ENCODE measurements at regions of chr19 and their contacts with region 1.

Region 1: DNA sequence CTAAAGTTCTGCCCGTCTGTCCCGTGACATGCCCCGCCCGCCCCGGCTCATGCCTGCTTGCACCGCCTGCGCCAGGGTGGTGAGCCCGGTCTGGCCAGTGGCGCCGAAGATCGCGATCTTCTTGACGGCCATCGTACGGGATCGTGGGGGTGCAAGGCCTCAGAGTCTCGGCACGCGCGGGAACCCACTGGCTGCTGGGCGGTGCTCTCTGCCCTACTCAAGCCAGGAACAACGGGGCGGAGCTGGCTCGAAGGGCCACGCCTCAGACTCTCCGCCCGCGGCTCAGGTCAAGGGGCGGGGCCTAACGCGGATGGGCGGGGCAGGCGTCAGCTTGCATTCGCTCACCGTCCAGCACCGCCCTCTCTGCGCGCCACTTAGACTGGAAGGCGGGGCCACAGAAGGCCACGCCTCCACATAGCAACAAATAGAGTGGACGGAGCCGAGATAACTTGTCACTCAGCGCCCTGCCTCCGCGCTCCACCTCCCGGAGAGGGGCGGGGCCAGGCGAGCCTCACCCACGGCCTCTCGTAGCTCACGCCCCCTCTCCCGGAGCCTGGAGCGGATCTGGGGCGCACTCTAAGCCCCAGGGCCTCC is at the start of gene BLVRB:
- DNase-seq: peak; percentile 100
- H3K4me3 ChIP-seq: peak within 1 kb of the TSS; percentile 43
- CTCF ChIP-seq: no peak
- POLR2A ChIP-seq: peak in 1 of 2 donors; percentile 65
- total RNA-seq, gene BLVRB: 139 to 161 (median 154) TPM

Region 2: DNA sequence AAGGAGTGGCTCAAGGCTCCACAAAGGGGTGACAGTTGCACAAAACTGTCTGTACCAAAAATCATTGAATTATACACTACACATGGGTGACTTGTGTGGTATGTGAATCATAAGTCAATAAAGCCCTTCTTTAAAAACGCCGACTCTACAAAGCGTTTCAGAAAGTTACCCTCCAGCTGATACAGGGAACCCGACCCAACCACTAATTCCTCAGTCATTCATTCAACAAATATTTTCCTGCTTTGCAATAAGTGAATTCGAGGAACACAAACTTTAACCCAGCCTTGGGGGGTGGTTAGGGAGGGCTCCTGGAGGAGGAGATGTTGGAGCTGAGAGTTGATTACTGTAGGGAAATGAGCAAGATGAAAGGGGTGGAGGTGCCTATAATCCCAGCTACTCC is 167.6 kb after region 1 on chr19:
- intact Hi-C with region 1: loop called (anchors 10 kb)
- DNase-seq: no peak
- H3K4me3 ChIP-seq: no peak overlapping the region
- CTCF ChIP-seq: no peak
- POLR2A ChIP-seq: no peak

Region 3: DNA sequence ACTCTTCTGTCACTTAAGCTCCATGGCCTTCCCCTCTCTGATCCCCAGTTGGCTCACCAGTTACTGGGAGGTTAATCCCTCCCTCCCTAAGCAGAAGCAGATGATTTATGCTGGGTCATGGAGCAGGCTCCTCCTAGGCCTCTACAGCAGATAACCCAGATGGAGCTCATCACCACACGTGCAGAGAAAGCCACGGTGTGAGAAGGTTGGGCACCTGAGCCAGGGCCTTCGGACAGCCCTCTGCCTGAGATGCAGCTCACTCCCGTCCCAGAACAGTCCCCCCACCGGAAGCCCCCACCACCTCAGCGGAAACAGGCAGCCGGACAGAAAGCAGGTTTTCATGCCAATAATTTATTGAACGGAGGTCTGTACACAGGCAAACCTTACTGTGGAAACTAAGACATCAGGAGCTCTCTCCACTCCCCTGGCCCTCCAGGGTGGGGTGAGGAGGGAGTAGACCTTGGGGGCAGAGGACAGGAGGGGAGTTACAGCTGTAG is 1764.2 kb after region 1 on chr19:
- intact Hi-C with region 1: no loop called
- DNase-seq: no peak
- H3K4me3 ChIP-seq: no peak overlapping the region
- CTCF ChIP-seq: no peak
- POLR2A ChIP-seq: no peak